ENCODE measurements at regions of chr3 and their contacts with region 1.

Region 1: DNA sequence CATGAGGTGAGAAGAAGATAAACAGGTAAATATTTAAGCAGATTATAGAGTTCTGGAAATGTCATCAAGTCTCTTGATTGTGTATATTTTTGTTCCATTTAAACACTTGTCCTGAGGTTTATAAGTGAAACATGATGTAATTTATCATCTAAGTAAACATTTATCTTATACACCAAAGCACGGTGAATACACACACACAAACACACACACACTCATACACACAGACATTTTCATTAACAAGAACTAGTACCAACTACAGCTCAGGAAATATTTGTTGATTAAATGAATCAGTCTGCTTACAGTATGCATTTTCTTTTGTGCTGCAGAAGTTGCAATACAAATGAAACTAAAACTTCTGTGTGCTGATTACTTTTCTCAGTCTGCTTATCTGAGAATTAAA is 357.3 kb downstream of the ZBTB20 start:
- DNase-seq: no peak
- H3K4me3 ChIP-seq: no peak overlapping the region
- CTCF ChIP-seq: no peak
- POLR2A ChIP-seq: no peak

Region 2: DNA sequence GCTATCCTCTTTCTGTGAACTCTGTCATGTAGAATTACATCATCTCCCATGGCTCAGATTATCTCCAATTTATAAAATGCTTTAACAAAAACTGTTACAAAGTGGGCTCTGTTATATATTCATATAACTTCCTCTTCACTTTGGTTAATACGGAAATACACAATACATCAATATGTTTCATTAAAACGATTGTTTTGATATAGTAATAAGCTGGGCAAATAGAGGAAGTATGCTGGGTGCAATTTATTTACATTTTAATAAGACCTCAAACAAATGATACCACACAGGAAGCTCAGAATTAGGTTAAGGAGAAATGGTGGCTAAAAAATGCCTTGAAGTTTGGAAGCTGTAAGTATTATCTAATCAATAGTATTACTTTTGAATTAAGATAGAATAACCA is 26.2 kb after region 1 on chr3:
- intact Hi-C with region 1: loop called (anchors 1 kb)
- DNase-seq: no peak
- H3K4me3 ChIP-seq: no peak overlapping the region
- CTCF ChIP-seq: no peak
- POLR2A ChIP-seq: no peak